HEK293 (cell line): ENCODE measurements at regions of chr2 and their contacts with region 1.

Region 1: GRCh38 chr2:240840435-240841080 is 20.5 kb upstream of the KIF1A start:
- H3K4me3 ChIP-seq: no peak overlapping the region
- H3K27ac ChIP-seq: no peak overlapping the region
- H3K4me1 ChIP-seq: no peaks in the 10 kb centered on the region
- CTCF ChIP-seq: peak; percentile 84

Region 2: DNA sequence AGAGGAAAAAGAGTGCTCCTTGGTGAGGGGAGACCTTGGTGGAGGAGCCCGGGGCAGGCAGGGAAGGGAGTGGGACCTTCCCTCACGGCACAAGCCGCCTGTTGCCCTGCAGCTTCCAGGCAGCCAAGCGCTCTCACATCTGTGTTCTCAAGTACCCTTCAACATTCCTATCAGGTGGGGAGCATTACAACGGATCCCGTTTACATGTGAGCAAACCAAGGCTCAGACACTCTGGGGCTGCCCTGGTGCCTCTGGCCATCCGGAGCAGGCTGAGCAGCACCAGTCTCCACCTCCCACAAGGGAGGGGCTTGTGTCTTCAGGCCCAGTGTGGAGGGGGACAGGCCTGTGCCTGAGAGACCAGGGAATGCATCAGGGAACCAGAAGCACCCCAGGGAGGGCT is 91.0 kb before region 1 on chr2:
- CTCF ChIA-PET with region 1: interaction called, 14 read pairs
- POLR2A ChIA-PET with region 1: no interaction called
- H3K4me3 ChIP-seq: no peak overlapping the region
- H3K27ac ChIP-seq: no peak overlapping the region
- H3K4me1 ChIP-seq: no peaks in the 10 kb centered on the region
- CTCF ChIP-seq: no peak

Region 3: GRCh38 chr2:240810207-240810606 is 30.4 kb before region 1 on chr2:
- CTCF ChIA-PET with region 1: interaction called, 13 read pairs
- POLR2A ChIA-PET with region 1: no interaction called
- H3K4me3 ChIP-seq: no peak overlapping the region
- H3K27ac ChIP-seq: no peak overlapping the region
- H3K4me1 ChIP-seq: no peaks in the 10 kb centered on the region
- CTCF ChIP-seq: no peak; the same call in 1 of the 2 replicates

Region 4: DNA sequence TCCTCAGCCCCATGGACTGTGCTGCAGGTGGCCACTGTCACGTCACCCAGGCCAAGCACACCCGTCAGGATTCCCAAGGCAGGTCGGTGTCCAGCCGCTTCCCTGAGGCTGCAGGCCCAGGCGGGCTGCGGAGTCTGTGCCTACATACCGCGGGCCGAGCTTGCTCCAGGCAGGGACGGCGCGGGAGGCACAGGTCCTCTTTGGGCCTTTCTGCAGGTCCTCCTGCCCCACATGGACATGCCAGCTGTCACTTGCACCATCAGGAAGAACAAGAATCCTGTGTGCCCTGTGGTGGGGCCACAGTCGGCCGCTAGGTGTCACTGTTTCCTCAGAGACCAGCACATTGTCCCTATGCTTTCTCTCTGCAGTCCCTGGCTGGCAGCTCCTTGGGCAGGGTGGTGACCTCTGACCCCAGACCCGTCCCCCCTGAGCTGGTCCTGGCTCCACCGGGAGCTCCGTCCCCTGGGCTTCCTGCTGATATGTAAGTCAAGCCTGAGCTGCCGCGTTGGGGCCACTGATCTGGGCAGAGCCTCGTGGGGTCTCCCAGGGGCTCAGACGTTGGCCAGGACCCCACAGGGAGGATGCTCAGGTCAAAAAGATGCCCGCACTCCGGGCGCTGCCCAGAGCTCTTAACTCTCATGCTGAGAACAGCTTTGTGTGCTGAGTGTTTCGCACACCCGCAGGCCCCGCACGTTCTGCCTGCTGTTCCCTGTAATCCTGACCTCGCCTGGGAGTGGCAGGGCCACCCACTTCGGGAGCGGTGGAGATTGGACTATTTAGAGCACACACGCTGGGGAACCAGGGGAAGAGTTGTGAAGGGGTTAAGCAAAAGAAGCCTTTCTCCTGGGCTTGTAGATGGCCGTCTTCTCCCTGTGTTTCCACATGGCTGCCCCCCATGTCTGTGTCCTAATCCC is 10.8 kb after region 1 on chr2:
- CTCF ChIA-PET with region 1: interaction called, 11 read pairs
- POLR2A ChIA-PET with region 1: no interaction called
- H3K4me3 ChIP-seq: no peak overlapping the region
- H3K27ac ChIP-seq: no peak overlapping the region
- H3K4me1 ChIP-seq: no peaks in the 10 kb centered on the region
- CTCF ChIP-seq: peak; percentile 94